ENCODE measurements at regions of chr11 and their contacts with region 1.

Region 1: GRCh38 chr11:18243783-18244362 is 4.6 kb downstream of the SAA2 start:
- DNase-seq: peak; percentile 54
- ATAC-seq: peak; percentile 38
- H3K4me3 ChIP-seq: no peak overlapping the region
- H3K27ac ChIP-seq: peak overlapping the region; percentile 12; the same call in 1 of the 2 replicates
- H3K4me1 ChIP-seq: peaks cover 20% of the 10 kb centered on the region
- H3K27me3 ChIP-seq: no peaks in the 10 kb centered on the region
- CTCF ChIP-seq: peak; percentile 85 to 94 (median 89)
- EP300 ChIP-seq: no peak
- POLR2A ChIP-seq: no peak
- RAD21 ChIP-seq: peak; percentile 93

Region 2: DNA sequence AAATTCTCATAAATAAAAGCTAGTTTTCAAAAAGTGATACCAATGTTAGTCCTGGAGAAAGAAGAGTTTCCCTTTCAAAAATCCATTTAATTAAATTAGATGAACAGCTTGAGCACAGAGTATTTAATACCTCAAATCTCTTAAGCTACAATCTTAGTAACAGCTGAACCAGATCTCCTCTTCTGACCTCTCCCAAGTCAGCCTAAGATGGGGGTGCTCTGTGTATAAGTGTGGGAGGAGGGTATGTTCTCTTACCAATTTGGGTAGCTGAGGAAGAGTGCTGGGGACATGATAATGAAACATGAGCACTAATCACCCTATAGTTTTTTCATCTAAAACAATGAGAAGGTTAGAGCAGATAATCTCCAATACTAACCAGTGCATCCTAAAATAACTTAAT is 207.4 kb before region 1 on chr11:
- CTCF ChIA-PET with region 1: no interaction called
- POLR2A ChIA-PET with region 1: no interaction called
- RAD21 ChIA-PET with region 1: no interaction called
- SMC1A ChIA-PET with region 1: no interaction called
- in situ Hi-C with region 1: no loop called
- intact Hi-C with region 1: no loop called
- DNase-seq: no peak
- ATAC-seq: no peak
- H3K4me3 ChIP-seq: no peak overlapping the region
- H3K27ac ChIP-seq: no peak overlapping the region
- H3K4me1 ChIP-seq: no peaks in the 10 kb centered on the region
- H3K27me3 ChIP-seq: no peaks in the 10 kb centered on the region; a peak in 1 of 4 replicates
- CTCF ChIP-seq: no peak
- EP300 ChIP-seq: no peak
- POLR2A ChIP-seq: no peak
- RAD21 ChIP-seq: no peak

Region 3: DNA sequence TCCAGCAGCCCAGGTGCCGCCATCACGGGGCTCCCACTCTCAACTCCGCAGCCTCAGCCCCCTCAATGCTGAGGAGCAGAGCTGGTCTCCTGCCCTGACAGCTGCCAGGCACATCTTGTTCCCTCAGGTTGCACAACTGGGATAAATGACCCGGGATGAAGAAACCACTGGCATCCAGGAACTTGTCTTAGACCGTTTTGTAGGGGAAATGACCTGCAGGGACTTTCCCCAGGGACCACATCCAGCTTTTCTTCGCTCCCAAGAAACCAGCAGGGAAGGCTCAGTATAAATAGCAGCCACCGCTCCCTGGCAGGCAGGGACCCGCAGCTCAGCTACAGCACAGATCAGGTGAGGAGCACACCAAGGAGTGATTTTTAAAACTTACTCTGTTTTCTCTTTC is 22.1 kb after region 1 on chr11 and contains the start of gene SAA1:
- CTCF ChIA-PET with region 1: interaction called, 16 read pairs
- POLR2A ChIA-PET with region 1: interaction called, 3 read pairs
- RAD21 ChIA-PET with region 1: interaction called, 9 read pairs
- SMC1A ChIA-PET with region 1: interaction called, 19 read pairs
- in situ Hi-C with region 1: no loop called
- intact Hi-C with region 1: loop called (anchors 1 kb)
- DNase-seq: no peak
- ATAC-seq: no peak
- H3K4me3 ChIP-seq: no peak within 1 kb of the TSS
- H3K27ac ChIP-seq: no peak within 1 kb of the TSS
- H3K4me1 ChIP-seq: peaks cover 20% of the 10 kb centered on the region
- H3K27me3 ChIP-seq: no peaks in the 10 kb centered on the region
- CTCF ChIP-seq: no peak
- EP300 ChIP-seq: no peak
- POLR2A ChIP-seq: no peak
- RAD21 ChIP-seq: no peak
- polyA plus RNA-seq, gene SAA1: not detected

Region 4: GRCh38 chr11:18310800-18311340 is 67.0 kb after region 1 on chr11:
- CTCF ChIA-PET with region 1: interaction called, 25 read pairs
- POLR2A ChIA-PET with region 1: no interaction called
- RAD21 ChIA-PET with region 1: interaction called, 29 read pairs
- SMC1A ChIA-PET with region 1: interaction called, 40 read pairs
- in situ Hi-C with region 1: no loop called
- intact Hi-C with region 1: no loop called
- DNase-seq: peak; percentile 70
- ATAC-seq: peak; percentile 84
- H3K4me3 ChIP-seq: no peak overlapping the region
- H3K27ac ChIP-seq: peak overlapping the region; percentile 47
- H3K4me1 ChIP-seq: peaks cover 22% of the 10 kb centered on the region
- H3K27me3 ChIP-seq: no peaks in the 10 kb centered on the region
- CTCF ChIP-seq: no peak
- EP300 ChIP-seq: peak in 1 of 2 experiments; percentile 7; a peak in 1 of 4 replicates
- POLR2A ChIP-seq: no peak
- RAD21 ChIP-seq: no peak

Region 5: DNA sequence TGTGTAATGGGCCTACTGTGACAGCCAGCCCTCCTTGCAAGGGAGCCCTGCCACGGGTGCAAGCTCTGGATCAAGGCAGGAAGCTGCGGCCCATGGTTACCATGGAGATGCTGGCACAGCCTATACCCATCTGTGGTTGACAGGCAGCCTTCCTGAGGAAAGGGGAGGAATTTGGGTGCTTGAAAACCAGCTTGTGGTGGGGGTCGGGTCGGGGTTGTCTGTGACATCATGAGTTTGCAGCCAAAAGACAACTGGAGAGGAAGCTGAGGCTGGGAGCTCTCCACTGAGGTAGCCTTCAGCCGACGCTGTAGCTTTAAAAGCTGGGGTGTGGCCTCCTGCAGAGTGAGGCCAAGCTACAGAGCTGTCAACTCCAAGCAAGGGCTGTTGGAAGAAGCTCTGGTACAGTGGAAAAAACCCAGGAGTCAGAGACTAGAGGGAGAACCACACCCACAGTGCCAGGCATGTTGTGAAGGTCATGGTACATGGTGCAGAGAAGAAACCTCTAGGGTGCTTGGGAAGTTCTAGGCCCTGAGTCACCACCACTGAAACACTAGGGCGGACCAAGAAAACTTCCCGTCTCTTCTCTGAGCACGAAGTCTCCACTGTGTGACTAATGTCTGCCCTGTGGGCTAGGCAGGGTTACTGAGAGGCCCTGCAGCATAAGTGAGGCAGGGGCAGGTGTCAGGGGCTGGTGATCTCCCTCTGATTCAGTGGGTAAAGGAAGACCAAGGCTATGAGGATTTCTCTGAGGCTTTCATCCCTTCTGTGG is 139.7 kb after region 1 on chr11:
- CTCF ChIA-PET with region 1: interaction called, 14 read pairs
- POLR2A ChIA-PET with region 1: no interaction called
- RAD21 ChIA-PET with region 1: interaction called, 14 read pairs
- SMC1A ChIA-PET with region 1: interaction called, 11 read pairs
- in situ Hi-C with region 1: no loop called
- intact Hi-C with region 1: no loop called
- DNase-seq: peak; percentile 70
- ATAC-seq: peak; percentile 93
- H3K4me3 ChIP-seq: 0 out of 2 replicates have a peak overlapping the region, but pooled peaks have one; percentile 22
- H3K27ac ChIP-seq: peak overlapping the region; percentile 98
- H3K4me1 ChIP-seq: peaks cover 22% of the 10 kb centered on the region
- H3K27me3 ChIP-seq: no peaks in the 10 kb centered on the region
- CTCF ChIP-seq: no peak
- EP300 ChIP-seq: no peak; a peak in 1 of 4 replicates
- POLR2A ChIP-seq: peak; percentile 71; the same call in 1 of the 2 replicates
- RAD21 ChIP-seq: no peak

Region 6: DNA sequence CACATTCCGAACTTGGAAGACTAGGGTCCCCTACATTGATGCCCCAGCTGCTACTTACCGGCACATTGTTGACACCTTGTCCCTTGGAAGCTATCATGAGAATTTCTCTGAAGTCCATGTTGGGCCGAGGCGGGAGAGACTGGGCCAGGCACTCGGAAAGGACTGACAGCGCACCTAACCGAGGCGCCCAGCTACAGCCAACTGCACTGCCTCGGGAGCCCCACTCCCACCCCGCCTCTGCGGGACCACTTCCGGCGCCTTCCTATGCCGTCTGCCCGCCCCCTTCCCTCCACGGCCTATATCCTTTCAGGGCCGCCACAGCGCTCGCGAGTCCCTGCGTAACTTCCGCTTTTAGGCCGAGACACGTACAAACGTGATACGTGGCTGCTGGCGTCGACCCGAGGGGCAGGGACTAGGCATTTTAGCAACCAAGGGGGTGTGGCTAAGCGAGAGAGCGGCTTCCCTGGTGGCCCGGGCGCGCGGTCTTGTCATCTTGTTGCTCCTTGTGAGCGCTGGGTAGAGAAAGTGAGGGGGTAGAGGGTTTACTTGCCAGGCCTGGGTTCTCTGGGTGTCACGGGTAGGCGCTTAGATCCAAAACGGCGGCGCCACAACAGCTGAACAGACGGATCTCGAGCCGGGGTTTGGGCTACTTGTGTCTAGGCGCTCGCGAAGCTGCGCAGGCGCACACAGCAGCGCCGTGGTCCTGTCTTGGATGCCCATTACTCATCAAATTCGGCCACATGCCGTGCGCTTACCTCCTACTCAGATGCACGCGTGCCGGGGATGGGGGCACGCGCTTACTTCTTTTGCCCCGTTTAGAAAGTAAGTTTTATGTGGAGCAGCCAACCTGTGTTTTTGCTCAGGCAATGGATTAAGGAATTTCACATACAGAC is 390.5 kb after region 1 on chr11 and contains the start of gene SPTY2D1:
- CTCF ChIA-PET with region 1: interaction called, 10 read pairs
- POLR2A ChIA-PET with region 1: no interaction called
- RAD21 ChIA-PET with region 1: interaction called, 4 read pairs
- SMC1A ChIA-PET with region 1: interaction called, 5 read pairs
- in situ Hi-C with region 1: no loop called
- intact Hi-C with region 1: no loop called
- DNase-seq: peak; percentile 93
- ATAC-seq: peak; percentile 96
- H3K4me3 ChIP-seq: peak within 1 kb of the TSS; percentile 99
- H3K27ac ChIP-seq: peak within 1 kb of the TSS; percentile 89
- H3K4me1 ChIP-seq: peaks cover 7% of the 10 kb centered on the region
- H3K27me3 ChIP-seq: no peaks in the 10 kb centered on the region
- CTCF ChIP-seq: no peak
- EP300 ChIP-seq: no peak; a peak in 1 of 4 replicates
- POLR2A ChIP-seq: peak; percentile 97
- RAD21 ChIP-seq: no peak
- polyA plus RNA-seq, gene SPTY2D1: 4.6 to 4.7 TPM

Region 7: DNA sequence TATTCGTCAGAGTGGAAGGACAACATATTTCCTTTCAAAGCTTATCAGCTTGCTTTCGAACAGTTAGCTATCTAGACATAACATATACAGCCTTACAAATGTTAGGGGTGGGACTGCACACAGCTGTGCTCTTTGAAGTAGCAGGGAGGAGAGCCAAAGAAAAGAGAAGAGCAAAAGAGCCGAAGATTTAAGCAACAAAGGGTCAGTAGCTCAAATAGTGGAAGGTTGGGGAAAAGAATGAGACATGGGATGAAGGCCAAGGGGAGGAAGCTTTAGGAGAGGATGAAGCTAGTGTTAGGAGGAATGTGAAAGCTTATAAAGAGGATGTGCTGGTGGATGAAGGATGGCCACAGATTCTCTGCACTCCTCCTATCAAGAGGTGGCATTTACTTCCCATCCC is 513.9 kb after region 1 on chr11:
- CTCF ChIA-PET with region 1: interaction called, 10 read pairs
- POLR2A ChIA-PET with region 1: no interaction called
- RAD21 ChIA-PET with region 1: no interaction called
- SMC1A ChIA-PET with region 1: no interaction called
- in situ Hi-C with region 1: no loop called
- intact Hi-C with region 1: no loop called
- DNase-seq: no peak
- ATAC-seq: no peak
- H3K4me3 ChIP-seq: no peak overlapping the region
- H3K27ac ChIP-seq: no peak overlapping the region
- H3K4me1 ChIP-seq: no peaks in the 10 kb centered on the region
- H3K27me3 ChIP-seq: no peaks in the 10 kb centered on the region; a peak in 2 of 4 replicates
- CTCF ChIP-seq: no peak
- EP300 ChIP-seq: no peak
- POLR2A ChIP-seq: no peak
- RAD21 ChIP-seq: no peak

Measured in GM12878 (cell line).